ENCODE measurements at regions of chr19 and their contacts with region 1.

Region 1: GRCh38 chr19:17245244-17245984 is at the start of gene NR2F6:
- H3K4me3 ChIP-seq: peak within 1 kb of the TSS; percentile 76
- H3K27ac ChIP-seq: peak within 1 kb of the TSS; percentile 82; the same call in 1 of the 2 replicates
- H3K4me1 ChIP-seq: peaks cover 10% of the 10 kb centered on the region
- CTCF ChIP-seq: no peak

Region 2: DNA sequence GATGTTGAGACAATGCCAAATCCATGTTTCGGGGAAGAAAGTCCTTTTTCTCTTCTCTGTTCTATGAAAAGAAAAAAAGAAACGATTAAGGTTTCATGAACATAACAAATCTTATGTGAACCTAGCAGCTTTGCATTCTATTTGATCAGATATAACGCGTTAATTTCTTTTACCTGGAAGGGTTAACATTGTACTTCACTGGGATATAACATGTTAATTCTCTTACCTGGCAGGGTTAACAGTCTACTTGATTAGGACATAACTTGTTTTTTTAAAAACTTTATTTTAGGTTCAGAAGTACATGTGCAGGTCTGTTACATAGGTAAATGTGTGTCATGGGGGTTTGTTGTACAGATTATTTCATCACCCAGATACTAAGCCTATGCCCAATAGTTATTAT is 287.6 kb before region 1 on chr19:
- CTCF ChIA-PET with region 1: no interaction called
- POLR2A ChIA-PET with region 1: no interaction called
- H3K4me3 ChIP-seq: no peak overlapping the region
- H3K27ac ChIP-seq: peak overlapping the region; percentile 7; the same call in 1 of the 2 replicates
- H3K4me1 ChIP-seq: peaks cover 8% of the 10 kb centered on the region
- CTCF ChIP-seq: no peak

Region 3: DNA sequence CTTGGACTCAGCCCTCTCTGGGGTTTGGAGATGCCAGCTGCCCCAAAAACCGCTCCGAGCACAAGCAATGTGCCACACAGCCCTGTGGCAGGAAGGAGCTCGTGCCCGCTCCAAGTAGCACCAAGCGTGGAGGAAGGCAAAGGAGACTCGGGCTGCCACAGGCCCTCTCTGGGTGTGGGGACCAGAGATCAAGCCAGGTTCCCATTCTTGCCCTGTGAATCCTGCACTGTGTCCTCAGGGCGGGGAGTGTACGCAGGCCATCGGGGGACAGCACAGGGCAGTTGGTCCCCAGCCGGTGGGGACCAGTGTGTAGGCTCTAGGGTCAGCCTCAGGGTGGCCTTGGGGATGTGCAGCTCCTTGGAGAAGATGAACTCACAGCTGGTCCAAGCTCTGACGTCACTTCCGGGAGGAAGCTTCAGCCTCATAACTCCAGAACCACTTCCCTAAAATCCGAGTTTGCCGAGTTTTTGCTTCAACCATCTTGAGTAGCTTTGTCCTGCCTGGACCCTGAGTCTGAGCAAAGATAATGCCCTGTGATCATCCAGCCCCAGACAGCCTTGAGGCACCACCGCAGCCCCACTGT is 209.5 kb before region 1 on chr19:
- CTCF ChIA-PET with region 1: no interaction called
- POLR2A ChIA-PET with region 1: no interaction called
- H3K4me3 ChIP-seq: no peak overlapping the region
- H3K27ac ChIP-seq: no peak overlapping the region
- H3K4me1 ChIP-seq: no peaks in the 10 kb centered on the region
- CTCF ChIP-seq: no peak

Region 4: DNA sequence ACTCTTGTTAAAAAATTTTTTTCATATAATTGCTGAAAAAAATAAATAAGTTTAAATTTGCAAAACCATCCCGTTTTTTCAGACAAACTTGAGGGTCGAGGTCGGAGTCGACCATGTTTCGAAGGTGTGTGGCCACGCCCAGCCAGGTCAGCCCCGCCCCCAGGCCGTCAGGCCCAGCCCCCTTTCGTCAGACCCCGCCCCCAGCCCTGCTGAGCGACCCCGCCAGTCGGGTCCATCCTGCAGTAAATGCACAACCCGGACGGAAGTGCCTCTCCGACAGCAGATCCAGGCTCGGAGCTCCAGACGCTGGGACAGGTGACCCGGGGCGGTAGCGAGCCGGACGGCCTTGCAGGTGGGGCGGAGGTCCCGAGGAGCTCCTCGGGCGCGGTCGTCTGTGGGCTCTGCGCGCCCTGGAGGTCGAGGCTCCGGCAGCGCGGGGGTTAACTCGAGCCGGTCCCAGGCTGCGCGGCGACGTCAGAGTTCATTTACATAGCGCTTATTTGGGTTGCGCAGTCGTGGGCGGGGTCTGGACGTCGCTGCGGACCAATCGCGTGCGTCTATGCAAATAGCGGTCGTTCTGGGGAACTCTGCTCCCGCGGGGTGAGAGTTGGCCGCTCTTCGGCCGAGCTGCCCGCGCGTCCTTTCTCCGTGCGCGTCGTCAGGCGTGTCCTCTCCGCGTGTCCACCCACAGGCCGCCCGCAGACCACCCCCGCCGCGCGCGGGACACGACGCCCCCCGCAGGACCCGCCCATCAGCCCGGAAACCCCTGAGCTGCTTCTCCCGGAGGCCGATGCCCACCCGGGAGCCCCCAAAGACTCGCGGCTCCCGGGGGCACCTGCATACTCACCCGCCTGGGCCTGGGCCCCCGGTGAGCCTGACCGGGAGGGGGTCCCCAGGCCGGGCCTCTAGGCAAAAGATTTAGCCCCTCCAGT is 19.1 kb before region 1 on chr19 and contains the start of gene OCEL1:
- CTCF ChIA-PET with region 1: interaction called, 3 read pairs
- POLR2A ChIA-PET with region 1: interaction called, 29 read pairs
- H3K4me3 ChIP-seq: peak within 1 kb of the TSS; percentile 76
- H3K27ac ChIP-seq: peak within 1 kb of the TSS; percentile 47; the same call in 1 of the 2 replicates
- H3K4me1 ChIP-seq: no peaks in the 10 kb centered on the region
- CTCF ChIP-seq: no peak; the same call in 1 of the 2 replicates

Region 5: GRCh38 chr19:17260842-17261325 is 15.5 kb after region 1 on chr19:
- CTCF ChIA-PET with region 1: interaction called, 26 read pairs
- POLR2A ChIA-PET with region 1: interaction called, 3 read pairs
- H3K4me3 ChIP-seq: no peak overlapping the region
- H3K27ac ChIP-seq: peak overlapping the region; percentile 38; the same call in 1 of the 2 replicates
- H3K4me1 ChIP-seq: no peaks in the 10 kb centered on the region
- CTCF ChIP-seq: peak; percentile 96